ENCODE measurements at regions of chr21 and their contacts with region 1.

Region 1: GRCh38 chr21:42892931-42893755 is at the start of gene NDUFV3:
- DNase-seq: peak; percentile 100
- H3K4me3 Mint-ChIP-seq: peak within 1 kb of the TSS; percentile 83
- H3K27ac Mint-ChIP-seq: peak within 1 kb of the TSS; percentile 84
- H3K4me1 Mint-ChIP-seq: peaks cover 14% of the 10 kb centered on the region
- H3K27me3 Mint-ChIP-seq: no peaks in the 10 kb centered on the region
- total RNA-seq, gene NDUFV3: 17.0 TPM

Region 2: DNA sequence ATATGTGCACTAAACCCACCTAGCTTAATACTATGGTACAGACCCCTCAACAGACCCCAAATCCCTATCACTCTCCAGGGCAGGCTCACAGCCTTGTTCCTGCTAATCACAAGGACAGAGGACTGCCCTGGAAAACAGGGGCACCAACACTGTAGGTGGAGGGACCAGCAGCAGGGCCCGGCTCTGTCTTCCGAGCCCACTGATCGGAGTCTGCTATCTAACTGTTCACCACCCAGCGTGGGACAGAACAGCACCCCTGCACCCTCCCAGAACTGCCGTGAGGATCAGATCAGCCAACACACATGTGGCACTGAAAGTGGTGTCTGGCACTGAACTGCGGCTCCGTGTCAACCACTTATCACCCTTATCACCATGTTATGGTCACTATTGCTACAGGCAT is 20.0 kb before region 1 on chr21:
- CTCF ChIA-PET with region 1: no interaction called
- POLR2A ChIA-PET with region 1: interaction called, 63 read pairs
- DNase-seq: no peak
- H3K4me3 Mint-ChIP-seq: no peak overlapping the region
- H3K27ac Mint-ChIP-seq: no peak overlapping the region
- H3K4me1 Mint-ChIP-seq: peaks cover 7% of the 10 kb centered on the region
- H3K27me3 Mint-ChIP-seq: no peaks in the 10 kb centered on the region

Region 3: GRCh38 chr21:42878993-42879787 is 14.0 kb before region 1 on chr21 and contains the start of gene WDR4:
- CTCF ChIA-PET with region 1: interaction called, 6 read pairs
- POLR2A ChIA-PET with region 1: interaction called, 63 read pairs
- DNase-seq: peak; percentile 99
- H3K4me3 Mint-ChIP-seq: peak within 1 kb of the TSS; percentile 95
- H3K27ac Mint-ChIP-seq: peak within 1 kb of the TSS; percentile 90
- H3K4me1 Mint-ChIP-seq: peaks cover 31% of the 10 kb centered on the region
- H3K27me3 Mint-ChIP-seq: no peaks in the 10 kb centered on the region
- total RNA-seq, gene WDR4: 18.2 to 18.5 TPM

Region 4: GRCh38 chr21:42973991-42974831 is 81.1 kb after region 1 on chr21 and contains the start of gene PKNOX1:
- CTCF ChIA-PET with region 1: interaction called, 4 read pairs
- POLR2A ChIA-PET with region 1: interaction called, 11 read pairs
- DNase-seq: peak; percentile 99
- H3K4me3 Mint-ChIP-seq: peak within 1 kb of the TSS; percentile 86
- H3K27ac Mint-ChIP-seq: peak within 1 kb of the TSS; percentile 92
- H3K4me1 Mint-ChIP-seq: peaks cover 33% of the 10 kb centered on the region
- H3K27me3 Mint-ChIP-seq: no peaks in the 10 kb centered on the region
- total RNA-seq, gene PKNOX1: 27.2 to 33.7 TPM

Measured in activated CD4-positive, alpha-beta memory T cell treated with anti-CD3 and anti-CD28 coated beads, Interleukin-2, amount 10 ng/mL, durations not matched to agents 7 days and 5 days (primary cell).